Transverse colon (tissue), 4 donors: ENCODE measurements at regions of chr12 and their contacts with region 1.

Region 1: GRCh38 chr12:64459394-64459891 is 7.5 kb downstream of the TBK1 start:
- DNase-seq: no peak
- H3K4me3 ChIP-seq: peak overlapping the region in 2 of 4 donors; percentile 6 to 21
- H3K27ac ChIP-seq: peak overlapping the region; percentile 54 to 64 (median 58)
- H3K4me1 ChIP-seq: peaks cover 3 to 23% (median 12%) of the 10 kb centered on the region in 4 donors
- H3K27me3 ChIP-seq: no peaks in the 10 kb centered on the region
- CTCF ChIP-seq: no peak
- EP300 ChIP-seq: no peak
- POLR2A ChIP-seq: no peak

Region 2: GRCh38 chr12:64362721-64363300 is 96.6 kb before region 1 on chr12:
- in situ Hi-C with region 1: no loop called
- intact Hi-C with region 1: no loop called
- DNase-seq: no peak
- H3K4me3 ChIP-seq: no peak overlapping the region
- H3K27ac ChIP-seq: no peak overlapping the region
- H3K4me1 ChIP-seq: no peaks in the 10 kb centered on the region
- H3K27me3 ChIP-seq: no peaks in the 10 kb centered on the region
- CTCF ChIP-seq: no peak
- EP300 ChIP-seq: no peak
- POLR2A ChIP-seq: no peak

Region 3: DNA sequence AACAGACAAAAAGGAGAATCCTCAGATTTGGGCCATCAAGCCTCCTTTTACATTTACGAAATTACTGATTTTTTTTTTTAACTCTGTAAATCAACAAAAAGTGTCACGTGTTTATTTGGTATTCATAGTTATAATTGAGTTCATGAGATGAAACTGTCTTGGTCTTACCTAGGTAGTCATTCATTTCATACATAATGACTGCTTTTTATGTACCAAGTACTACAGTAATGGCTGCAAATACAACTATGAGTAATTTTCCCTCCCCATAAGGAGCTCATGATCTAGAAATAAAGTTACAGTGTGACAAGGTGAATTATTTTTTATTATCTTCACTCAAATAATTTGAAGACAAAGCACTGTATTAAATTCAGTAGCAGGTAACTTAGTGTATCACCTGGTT is 14.0 kb before region 1 on chr12:
- in situ Hi-C with region 1: no loop called
- intact Hi-C with region 1: loop called (anchors 2 kb)
- DNase-seq: no peak
- H3K4me3 ChIP-seq: no peak overlapping the region
- H3K27ac ChIP-seq: no peak overlapping the region
- H3K4me1 ChIP-seq: no peaks in the 10 kb centered on the region
- H3K27me3 ChIP-seq: no peaks in the 10 kb centered on the region
- CTCF ChIP-seq: no peak
- EP300 ChIP-seq: no peak
- POLR2A ChIP-seq: no peak